H1 (cell line): ENCODE measurements at regions of chr3 and their contacts with region 1.

Region 1: GRCh38 chr3:127697551-127698240 is 24.9 kb downstream of the ABTB1 start:
- DNase-seq: peak in 1 of 2 experiments; percentile 72
- H3K4me3 ChIP-seq: peak overlapping the region in 1 of 4 experiments; percentile 3; a peak in 1 of 8 replicates
- H3K27ac ChIP-seq: no peak overlapping the region
- H3K4me1 ChIP-seq: peaks cover 0 to 3% (median under 1%) of the 10 kb centered on the region in 4 experiments; a peak in 2 of 7 replicates
- H3K27me3 ChIP-seq: no peaks in the 10 kb centered on the region
- CTCF ChIP-seq: no peak
- EP300 ChIP-seq: no peak
- POLR2A ChIP-seq: no peak
- RAD21 ChIP-seq: no peak

Region 2: DNA sequence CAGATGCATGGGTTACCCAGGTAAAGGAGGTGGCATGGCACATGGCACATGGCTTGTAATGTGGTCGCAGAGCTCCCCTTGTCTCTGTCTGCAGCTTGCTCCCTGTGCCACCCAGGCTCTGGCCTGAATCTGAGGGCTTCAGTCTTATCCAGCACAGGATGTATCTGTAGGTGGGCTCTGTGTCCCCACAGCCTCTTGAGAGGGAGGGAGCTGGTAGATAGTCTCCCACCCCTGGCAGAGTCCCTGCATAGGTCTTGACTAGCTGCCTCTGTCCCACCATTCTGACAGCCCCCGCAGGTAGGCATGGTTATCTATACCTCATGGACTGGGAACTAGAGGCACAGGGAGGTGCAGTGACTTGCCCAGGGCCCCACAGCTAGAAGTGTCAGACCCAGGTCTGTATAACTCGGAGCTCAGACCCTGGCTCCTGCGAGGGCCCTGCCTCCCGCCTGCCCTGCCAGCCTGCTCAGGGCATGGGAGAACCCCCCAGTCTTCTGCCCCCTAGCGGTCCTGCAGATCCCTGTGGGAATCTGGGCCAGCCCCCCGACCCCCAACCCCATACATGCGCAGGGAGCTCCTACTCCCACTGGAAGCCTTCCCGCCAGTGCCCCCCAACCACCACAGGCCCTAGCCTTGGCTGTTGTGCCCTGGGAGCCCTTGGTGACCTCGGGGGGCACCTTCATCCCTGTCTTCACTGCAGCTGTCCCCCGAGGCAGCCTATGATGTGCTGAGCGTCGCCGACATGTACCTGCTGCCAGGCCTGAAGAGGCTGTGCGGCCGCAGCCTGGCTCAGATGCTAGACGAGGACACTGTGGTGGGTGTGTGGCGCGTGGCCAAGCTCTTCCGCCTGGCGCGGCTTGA is 18.2 kb before region 1 on chr3:
- CTCF ChIA-PET with region 1: interaction called, 172 read pairs
- POLR2A ChIA-PET with region 1: no interaction called
- DNase-seq: peak in 1 of 2 experiments; percentile 82
- H3K4me3 ChIP-seq: no peak overlapping the region
- H3K27ac ChIP-seq: no peak overlapping the region
- H3K4me1 ChIP-seq: peaks cover 0 to 6% (median 4%) of the 10 kb centered on the region in 4 experiments; a peak in 4 of 7 replicates
- H3K27me3 ChIP-seq: no peaks in the 10 kb centered on the region
- CTCF ChIP-seq: peak in 2 of 3 experiments; percentile 65 to 73; a peak in 3 of 4 replicates
- EP300 ChIP-seq: no peak
- POLR2A ChIP-seq: no peak
- RAD21 ChIP-seq: peak; percentile 36 to 49; a peak in 3 of 4 replicates

Region 3: DNA sequence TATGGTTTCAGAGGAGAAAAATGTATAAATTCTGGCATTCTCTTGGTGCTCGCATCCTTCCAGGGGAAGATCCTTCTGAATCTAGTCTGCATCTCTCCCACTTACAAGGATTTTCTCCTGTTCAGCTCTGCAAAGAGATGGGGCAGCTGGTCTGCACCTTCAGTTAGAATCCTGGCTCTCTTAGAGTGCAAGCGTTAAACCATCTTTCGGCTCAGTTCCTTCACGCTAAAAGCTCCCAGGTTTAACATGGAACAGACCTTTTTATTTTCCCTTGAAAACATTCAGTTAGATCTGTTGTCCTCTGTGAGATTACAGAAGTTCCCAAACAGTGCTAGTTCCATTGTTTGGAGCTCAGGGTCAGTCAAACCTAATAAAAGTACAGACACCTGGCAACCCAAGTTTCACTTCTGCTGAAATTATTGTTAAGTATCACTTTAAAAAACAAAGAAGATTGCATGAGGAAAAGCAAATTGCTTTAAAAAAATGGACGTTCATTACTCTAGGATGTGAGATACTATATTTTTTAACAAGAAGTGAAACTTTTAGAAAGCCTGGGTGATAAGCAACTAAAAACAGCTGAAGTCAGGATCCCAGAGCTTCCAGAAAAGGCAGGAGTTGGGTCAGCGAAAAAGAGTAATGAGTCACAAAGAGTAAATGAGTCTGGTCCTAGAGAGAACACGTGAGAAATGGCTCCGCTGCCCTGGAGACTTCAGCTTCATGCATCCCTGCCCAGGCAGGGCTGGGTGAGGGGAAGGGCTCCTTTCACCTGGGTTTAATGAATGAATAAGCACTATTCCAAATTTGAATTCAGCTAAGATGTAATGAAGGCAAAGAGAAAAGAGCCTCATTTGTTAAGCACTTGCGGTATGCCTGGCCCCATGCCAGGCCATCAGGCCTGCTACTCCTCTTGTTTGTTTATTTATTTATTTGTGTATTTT is 38.3 kb after region 1 on chr3:
- CTCF ChIA-PET with region 1: interaction called, 14 read pairs
- POLR2A ChIA-PET with region 1: no interaction called
- DNase-seq: no peak
- H3K4me3 ChIP-seq: no peak overlapping the region
- H3K27ac ChIP-seq: no peak overlapping the region
- H3K4me1 ChIP-seq: peaks cover 0 to 13% (median 5%) of the 10 kb centered on the region in 4 experiments; a peak in 5 of 7 replicates
- H3K27me3 ChIP-seq: peaks cover 0 to 2% (median 0%) of the 10 kb centered on the region in 4 experiments; a peak in 3 of 7 replicates
- CTCF ChIP-seq: no peak
- EP300 ChIP-seq: no peak
- POLR2A ChIP-seq: no peak
- RAD21 ChIP-seq: no peak

Region 4: DNA sequence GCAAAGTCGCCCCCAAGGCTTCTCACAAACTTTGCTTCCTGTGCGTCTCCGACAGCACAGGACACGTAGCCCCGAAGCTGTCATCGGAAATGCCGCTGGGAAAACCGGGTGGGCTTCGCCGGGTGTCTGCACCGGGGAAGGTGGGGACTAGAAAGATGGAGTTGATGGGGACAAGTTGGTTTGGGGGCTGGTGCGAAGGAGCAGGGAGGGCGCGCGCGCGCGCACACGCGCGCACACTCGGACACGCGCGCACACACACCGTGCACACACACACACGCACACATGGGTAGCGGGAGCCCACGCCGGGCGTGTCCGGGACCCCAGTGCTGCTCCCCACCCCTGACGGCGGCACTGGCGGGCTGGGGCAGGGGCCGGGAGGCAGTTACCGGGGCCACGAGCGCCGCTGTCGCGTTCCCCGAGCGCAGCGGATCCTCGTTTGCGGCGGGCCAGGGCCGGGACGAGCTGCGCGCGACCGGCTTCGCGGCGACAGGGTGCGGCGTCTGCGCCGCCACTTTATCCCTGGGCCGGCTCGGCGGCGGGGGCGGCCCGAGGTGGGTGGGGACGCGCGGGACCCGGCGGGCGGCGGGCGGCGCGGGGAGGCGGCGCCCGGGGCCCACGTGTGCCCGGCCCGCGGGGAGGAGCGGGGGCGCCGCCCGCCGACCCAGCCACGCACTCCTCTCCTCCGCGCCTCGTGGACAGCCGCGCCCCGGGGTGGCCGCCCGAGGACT is 125.2 kb after region 1 on chr3:
- CTCF ChIA-PET with region 1: interaction called, 13 read pairs
- POLR2A ChIA-PET with region 1: no interaction called
- DNase-seq: peak in 1 of 2 experiments; percentile 60
- H3K4me3 ChIP-seq: peak overlapping the region; percentile 56 to 75 (median 64)
- H3K27ac ChIP-seq: no peak overlapping the region
- H3K4me1 ChIP-seq: peaks cover 0 to 10% (median 1%) of the 10 kb centered on the region in 4 experiments; a peak in 6 of 7 replicates
- H3K27me3 ChIP-seq: peaks cover 11 to 31% (median 25%) of the 10 kb centered on the region in 4 experiments; a peak in 6 of 7 replicates
- CTCF ChIP-seq: no peak
- EP300 ChIP-seq: no peak
- POLR2A ChIP-seq: no peak
- RAD21 ChIP-seq: no peak